ENCODE measurements at regions of chr17 and their contacts with region 1.

Region 1: DNA sequence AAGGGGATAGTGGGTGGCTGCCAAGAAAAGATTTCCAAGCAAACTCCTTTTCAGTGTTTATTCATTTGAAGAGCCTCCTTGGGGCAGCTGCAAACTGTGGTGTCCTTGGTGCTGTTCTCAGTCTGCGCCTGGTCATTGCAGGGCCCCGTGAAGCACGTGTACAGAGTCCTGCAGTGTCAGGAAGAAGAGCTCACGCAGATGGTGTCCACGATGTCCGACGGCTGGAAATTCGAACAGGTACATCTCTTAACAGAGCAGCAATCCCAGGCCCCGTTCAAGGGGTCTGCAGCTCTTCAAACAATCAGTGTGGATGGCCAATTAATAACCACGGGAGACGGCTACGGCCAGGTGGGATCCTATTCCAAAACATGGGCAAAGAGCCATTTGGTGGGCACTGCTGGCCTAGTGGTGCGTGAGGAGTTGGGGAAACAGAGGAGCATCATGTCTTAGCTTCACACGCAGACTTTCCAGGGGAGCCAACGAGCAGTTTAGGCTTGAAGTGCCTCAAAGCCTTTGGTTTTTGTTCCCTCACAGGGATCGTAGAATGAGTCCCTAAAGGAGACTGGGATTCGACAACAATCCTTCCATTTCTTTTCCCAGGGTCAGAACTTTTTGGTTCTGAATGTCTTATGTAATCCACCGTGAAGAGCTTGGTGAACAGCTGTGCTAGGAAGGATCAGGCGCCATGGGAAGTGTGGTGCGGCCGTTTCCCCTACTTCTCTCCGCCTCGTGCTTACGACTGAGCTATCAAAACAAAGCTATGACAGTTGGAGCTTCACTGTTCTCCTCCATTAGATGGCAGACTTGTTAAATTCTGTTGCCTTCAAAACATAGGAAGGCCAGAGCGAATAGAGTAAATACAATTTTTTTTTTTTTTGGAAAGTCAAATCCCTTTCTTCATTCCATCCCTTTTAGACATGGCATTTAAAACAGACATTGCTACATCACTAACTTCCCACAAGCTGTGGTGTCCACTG is 12.6 kb downstream of the KCTD2 start:
- DNase-seq: peak; percentile 64

Region 2: DNA sequence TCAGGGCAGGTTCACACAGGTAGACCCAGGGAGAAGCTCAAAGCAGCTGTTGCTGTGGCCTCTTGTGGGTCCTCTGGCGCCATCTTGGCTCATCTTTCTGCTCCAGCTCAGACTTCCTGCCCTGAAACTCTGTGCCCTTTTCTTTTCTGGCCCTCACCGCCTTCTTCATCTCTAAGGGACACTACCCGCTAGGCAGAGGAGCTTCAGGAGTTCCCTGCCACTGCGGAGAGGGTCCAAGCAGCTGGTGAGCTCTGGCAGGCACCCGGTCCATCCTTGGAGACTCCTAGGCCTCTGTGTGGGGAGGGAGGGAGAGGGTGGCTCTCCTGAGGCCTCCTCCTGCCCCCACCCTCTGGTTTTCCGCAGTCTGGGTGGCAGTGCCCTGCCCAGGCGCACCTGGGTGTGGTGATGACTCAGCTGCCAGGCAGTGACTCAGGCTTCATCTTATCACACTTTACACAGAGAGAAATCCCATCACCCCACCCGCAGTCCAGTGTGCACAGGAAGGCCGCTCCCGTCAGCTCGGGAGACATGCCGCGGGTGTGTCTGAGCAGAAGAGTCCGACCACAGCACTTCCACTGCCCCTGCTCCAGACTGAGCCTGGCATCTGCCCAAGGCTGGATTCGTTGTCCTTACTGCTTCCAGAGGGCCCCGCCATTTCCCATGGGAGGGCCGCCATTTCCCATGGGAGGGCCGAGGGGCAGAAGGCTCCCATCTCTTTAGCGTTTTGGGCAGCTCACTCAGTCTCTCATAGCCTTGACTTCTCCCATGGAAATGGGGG is 64.6 kb after region 1 on chr17:
- in situ Hi-C with region 1: loop called (anchors 10 kb)
- DNase-seq: peak; percentile 99

Measured in ACHN (cell line).